ENCODE measurements at regions of chr2 and their contacts with region 1.

Region 1: DNA sequence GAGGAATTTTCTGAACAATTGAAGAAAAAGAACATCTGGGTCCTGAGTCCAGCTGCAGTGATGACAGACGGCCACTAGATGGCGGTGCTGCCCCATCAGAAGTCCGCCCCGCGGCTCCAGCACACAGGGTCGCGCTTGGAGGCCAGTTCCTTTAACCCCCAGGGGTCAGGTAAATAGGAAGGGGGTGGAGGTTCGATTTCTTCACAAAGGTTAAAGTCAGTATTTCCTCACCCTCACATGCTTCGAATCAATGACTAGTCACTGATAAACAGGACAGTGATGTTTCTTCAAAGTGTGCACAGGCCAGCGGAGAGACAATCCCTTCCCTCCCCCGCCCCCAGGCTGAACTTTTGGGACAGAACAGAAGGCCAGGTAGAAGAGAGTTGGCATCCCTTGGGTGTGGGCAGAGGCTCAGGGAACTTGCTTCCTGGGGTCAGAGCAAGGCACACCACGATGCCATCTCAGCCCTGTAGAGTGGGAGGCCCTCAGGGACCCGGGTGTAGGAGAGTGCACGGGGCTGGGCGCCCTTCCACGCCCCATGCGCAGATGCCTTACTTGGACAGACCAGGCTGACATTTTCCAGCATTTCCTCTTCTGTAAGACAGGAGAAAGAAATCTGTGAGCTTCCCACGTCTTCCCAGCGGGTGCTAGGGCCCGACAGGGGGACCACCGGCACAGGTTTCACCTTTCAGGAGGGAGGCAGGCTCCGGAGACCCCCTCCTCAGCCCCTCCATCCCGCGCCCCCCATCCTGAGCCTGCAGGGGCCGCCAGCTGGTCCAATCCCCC is 722 bp downstream of the APOB start:
- DNase-seq: peak; percentile 77
- ATAC-seq: peak; percentile 76
- H3K4me3 ChIP-seq: no peak overlapping the region
- H3K27ac ChIP-seq: no peak overlapping the region
- H3K4me1 ChIP-seq: peaks cover 13% of the 10 kb centered on the region
- H3K27me3 ChIP-seq: no peaks in the 10 kb centered on the region
- CTCF ChIP-seq: peak; percentile 98

Region 2: DNA sequence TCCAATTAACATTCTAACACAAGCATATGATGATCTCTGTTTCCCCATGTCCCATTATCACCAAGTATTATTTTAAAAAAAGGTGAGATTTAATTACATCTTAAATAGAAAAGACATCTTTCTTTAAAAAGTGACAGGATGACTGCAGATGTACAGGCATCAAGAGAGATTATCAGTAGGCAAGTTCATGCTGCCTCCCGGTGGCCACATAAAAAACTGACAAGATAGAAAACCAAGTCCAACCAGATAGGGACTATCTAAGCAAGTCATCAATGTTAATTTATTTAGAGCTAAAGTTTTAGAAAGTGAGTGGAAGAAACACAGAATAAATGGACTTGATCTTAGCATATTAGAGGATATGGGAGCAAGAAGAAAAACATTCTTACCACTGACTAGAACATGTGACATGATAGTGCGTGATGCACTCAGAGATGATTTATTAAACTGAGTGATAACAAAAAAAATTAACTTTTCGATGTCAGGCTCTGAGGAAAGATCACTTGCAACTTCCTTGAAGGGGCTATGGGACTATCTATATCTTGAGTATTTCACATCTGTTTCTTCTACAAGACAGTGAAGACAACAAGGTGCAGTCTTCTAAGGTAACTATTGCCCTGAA is 75.3 kb after region 1 on chr2:
- intact Hi-C with region 1: loop called (anchors 10 kb)
- DNase-seq: no peak
- ATAC-seq: peak; percentile 50
- H3K4me3 ChIP-seq: no peak overlapping the region
- H3K27ac ChIP-seq: no peak overlapping the region
- H3K4me1 ChIP-seq: no peaks in the 10 kb centered on the region
- H3K27me3 ChIP-seq: peaks cover 4% of the 10 kb centered on the region
- CTCF ChIP-seq: peak; percentile 64